PC-3 (cell line): ENCODE measurements at regions of chr11 and their contacts with region 1.

Region 1: DNA sequence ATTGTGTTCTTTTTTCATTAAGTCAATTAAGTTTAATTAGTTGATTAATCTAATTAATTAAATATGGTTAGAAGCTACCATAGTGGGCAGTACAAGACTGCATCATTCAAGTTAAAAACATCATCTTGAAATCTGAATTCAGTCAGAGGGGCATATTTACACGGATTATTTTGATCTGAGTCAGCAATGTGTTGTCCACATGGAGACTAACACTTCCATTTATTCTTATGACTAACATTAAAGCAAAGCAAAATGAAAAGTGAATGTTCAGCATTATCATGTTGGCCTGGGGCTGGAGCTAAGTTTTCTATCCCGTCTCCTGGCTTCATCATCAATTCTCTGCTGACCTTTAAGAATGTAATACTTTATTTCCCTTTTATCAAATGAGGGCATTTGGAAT is 17.3 kb downstream of the FLI1 start:
- DNase-seq: peak; percentile 88
- ATAC-seq: peak; percentile 46
- H3K4me3 ChIP-seq: no peak overlapping the region
- H3K27ac ChIP-seq: peak overlapping the region; percentile 80
- H3K4me1 ChIP-seq: peaks cover 53% of the 10 kb centered on the region
- H3K27me3 ChIP-seq: no peaks in the 10 kb centered on the region
- CTCF ChIP-seq: no peak

Region 2: GRCh38 chr11:128660947-128661346 is 50.2 kb before region 1 on chr11:
- CTCF ChIA-PET with region 1: no interaction called
- POLR2A ChIA-PET with region 1: no interaction called
- intact Hi-C with region 1: no loop called
- DNase-seq: no peak
- ATAC-seq: no peak
- H3K4me3 ChIP-seq: no peak overlapping the region
- H3K27ac ChIP-seq: no peak overlapping the region
- H3K4me1 ChIP-seq: no peaks in the 10 kb centered on the region
- H3K27me3 ChIP-seq: no peaks in the 10 kb centered on the region
- CTCF ChIP-seq: no peak

Region 3: GRCh38 chr11:128772814-128773213 is 61.7 kb after region 1 on chr11:
- CTCF ChIA-PET with region 1: no interaction called
- POLR2A ChIA-PET with region 1: interaction called, 14 read pairs
- intact Hi-C with region 1: no loop called
- DNase-seq: no peak
- ATAC-seq: no peak
- H3K4me3 ChIP-seq: no peak overlapping the region
- H3K27ac ChIP-seq: no peak overlapping the region
- H3K4me1 ChIP-seq: no peaks in the 10 kb centered on the region
- H3K27me3 ChIP-seq: no peaks in the 10 kb centered on the region
- CTCF ChIP-seq: no peak

Region 4: DNA sequence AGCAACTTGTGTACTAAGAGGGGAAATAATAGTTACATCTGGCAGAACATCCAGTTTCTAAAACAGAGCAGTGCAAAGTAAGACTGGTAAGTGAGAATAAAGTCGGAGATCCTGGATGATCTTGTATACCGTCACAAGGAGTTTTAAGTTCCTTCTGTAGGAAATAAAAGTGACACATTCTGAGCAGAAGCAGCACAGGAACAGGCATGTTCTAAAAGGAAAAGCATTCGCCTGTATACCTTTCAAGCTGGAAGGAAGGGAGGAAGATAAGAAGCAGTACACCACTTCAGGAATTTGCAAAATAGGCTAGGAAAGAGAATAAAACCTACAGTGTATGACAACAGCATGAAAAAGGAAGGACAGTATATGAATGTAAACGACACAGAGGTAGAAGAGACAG is 337.8 kb after region 1 on chr11:
- CTCF ChIA-PET with region 1: no interaction called
- POLR2A ChIA-PET with region 1: no interaction called
- intact Hi-C with region 1: no loop called
- DNase-seq: no peak
- ATAC-seq: no peak
- H3K4me3 ChIP-seq: no peak overlapping the region
- H3K27ac ChIP-seq: no peak overlapping the region
- H3K4me1 ChIP-seq: peaks cover 8% of the 10 kb centered on the region
- H3K27me3 ChIP-seq: no peaks in the 10 kb centered on the region
- CTCF ChIP-seq: no peak

Region 5: DNA sequence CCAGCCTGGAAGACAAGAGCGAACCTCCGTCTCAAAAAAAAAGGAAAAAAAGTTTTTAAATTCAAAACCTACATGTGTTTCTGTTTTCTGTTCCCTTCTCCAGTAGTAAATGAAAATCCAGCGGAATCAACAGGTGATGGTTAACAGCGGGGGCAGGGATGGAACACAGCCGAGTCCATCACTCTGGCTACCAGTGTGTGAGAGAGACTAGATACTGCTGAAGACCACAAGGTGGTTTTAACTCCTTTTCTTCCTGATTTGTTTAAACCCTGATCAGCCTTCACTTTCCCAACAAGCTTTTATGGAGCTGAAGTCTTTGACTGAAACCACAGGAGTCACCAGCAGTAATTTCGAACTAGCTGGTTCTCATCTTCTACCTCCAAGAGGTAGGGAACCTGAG is 484.5 kb after region 1 on chr11:
- CTCF ChIA-PET with region 1: no interaction called
- POLR2A ChIA-PET with region 1: no interaction called
- intact Hi-C with region 1: no loop called
- DNase-seq: no peak
- ATAC-seq: no peak
- H3K4me3 ChIP-seq: no peak overlapping the region
- H3K27ac ChIP-seq: no peak overlapping the region
- H3K4me1 ChIP-seq: peaks cover 17% of the 10 kb centered on the region
- H3K27me3 ChIP-seq: no peaks in the 10 kb centered on the region
- CTCF ChIP-seq: no peak